ENCODE measurements at regions of chr12 and their contacts with region 1.

Region 1: GRCh38 chr12:109775172-109775881 is 57.9 kb downstream of the TRPV4 start:
- DNase-seq: peak; percentile 77

Region 2: GRCh38 chr12:109518820-109519665 is 256.3 kb before region 1 on chr12:
- in situ Hi-C with region 1: loop called (anchors 25 kb)
- DNase-seq: peak; percentile 65

Region 3: GRCh38 chr12:109982210-109982609 is 206.9 kb after region 1 on chr12:
- in situ Hi-C with region 1: no loop called
- DNase-seq: no peak

Measured in ACHN (cell line).